Sigmoid colon (tissue), 7 donors: ENCODE measurements at regions of chr7 and their contacts with region 1.

Region 1: GRCh38 chr7:55365675-55366460 is 731 bp downstream of the LANCL2 start:
- DNase-seq: peak; percentile 97
- H3K4me3 ChIP-seq: peak overlapping the region; percentile 62 to 94 (median 74)
- H3K27ac ChIP-seq: peak overlapping the region; percentile 93 to 99 (median 96)
- H3K4me1 ChIP-seq: peaks cover 0 to 22% (median 18%) of the 10 kb centered on the region in 4 donors
- H3K27me3 ChIP-seq: no peaks in the 10 kb centered on the region
- CTCF ChIP-seq: peak in 3 of 4 experiments; percentile 20 to 41 (median 21)
- EP300 ChIP-seq: peak in 2 of 4 donors; percentile 9 to 15
- POLR2A ChIP-seq: peak; percentile 8 to 50

Region 2: DNA sequence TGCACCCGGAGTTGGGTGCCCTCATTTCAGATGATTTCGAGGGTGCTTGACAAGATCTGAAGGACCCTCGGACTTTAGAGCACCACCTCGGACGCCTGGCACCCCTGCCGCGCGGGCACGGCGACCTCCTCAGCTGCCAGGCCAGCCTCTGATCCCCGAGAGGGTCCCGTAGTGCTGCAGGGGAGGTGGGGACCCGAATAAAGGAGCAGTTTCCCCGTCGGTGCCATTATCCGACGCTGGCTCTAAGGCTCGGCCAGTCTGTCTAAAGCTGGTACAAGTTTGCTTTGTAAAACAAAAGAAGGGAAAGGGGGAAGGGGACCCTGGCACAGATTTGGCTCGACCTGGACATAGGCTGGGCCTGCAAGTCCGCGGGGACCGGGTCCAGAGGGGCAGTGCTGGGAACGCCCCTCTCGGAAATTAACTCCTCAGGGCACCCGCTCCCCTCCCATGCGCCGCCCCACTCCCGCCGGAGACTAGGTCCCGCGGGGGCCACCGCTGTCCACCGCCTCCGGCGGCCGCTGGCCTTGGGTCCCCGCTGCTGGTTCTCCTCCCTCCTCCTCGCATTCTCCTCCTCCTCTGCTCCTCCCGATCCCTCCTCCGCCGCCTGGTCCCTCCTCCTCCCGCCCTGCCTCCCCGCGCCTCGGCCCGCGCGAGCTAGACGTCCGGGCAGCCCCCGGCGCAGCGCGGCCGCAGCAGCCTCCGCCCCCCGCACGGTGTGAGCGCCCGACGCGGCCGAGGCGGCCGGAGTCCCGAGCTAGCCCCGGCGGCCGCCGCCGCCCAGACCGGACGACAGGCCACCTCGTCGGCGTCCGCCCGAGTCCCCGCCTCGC is 347.3 kb before region 1 on chr7 and contains the start of gene EGFR:
- intact Hi-C with region 1: loop called (anchors 5 kb)
- DNase-seq: peak; percentile 94
- H3K4me3 ChIP-seq: peak within 1 kb of the TSS; percentile 80 to 89 (median 82)
- H3K27ac ChIP-seq: peak within 1 kb of the TSS; percentile 93 to 97 (median 94)
- H3K4me1 ChIP-seq: peaks cover 0 to 28% (median 26%) of the 10 kb centered on the region in 4 donors
- H3K27me3 ChIP-seq: no peaks in the 10 kb centered on the region
- CTCF ChIP-seq: no peak
- EP300 ChIP-seq: no peak
- POLR2A ChIP-seq: peak in 1 of 2 donors; percentile 40
- total RNA-seq, gene EGFR: 35.6 to 61.5 (median 40.8) TPM

Region 3: DNA sequence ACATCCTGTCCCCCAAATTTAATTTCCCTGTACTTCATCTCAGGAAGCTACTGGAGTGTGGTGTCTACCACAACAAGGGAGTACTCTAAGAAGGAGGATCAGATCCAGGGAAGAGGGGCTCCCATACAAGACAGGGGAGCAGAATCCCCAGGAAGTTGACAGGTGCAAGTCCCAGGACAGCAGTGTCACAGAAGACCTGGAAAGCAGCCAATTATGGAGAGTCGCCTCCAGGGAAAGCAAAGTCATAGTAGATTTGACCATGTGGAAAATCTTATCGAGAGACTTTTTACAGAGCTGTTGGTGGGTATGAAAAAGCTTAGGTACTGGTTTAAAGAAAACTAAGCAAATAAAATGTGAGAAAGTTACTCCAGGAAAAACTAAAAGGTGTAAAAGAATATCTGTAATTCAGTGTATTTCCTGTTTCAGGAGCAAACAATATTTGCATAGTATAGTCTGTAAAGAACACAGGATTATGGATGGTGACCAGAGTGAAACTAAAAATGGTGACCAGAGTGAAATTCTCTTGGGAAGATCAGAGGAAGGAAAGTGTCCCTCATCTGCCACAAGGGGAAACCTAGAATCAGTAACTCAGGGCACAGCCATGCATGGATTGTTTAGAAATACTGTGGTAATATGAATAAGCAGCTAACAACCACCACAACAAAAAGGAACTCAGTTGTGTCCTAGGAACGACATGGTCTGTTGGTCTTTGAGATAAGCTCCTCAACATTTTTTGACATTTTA is 43.8 kb after region 1 on chr7:
- intact Hi-C with region 1: loop called (anchors 5 kb)
- DNase-seq: no peak
- H3K4me3 ChIP-seq: no peak overlapping the region
- H3K27ac ChIP-seq: no peak overlapping the region
- H3K4me1 ChIP-seq: no peaks in the 10 kb centered on the region
- H3K27me3 ChIP-seq: no peaks in the 10 kb centered on the region
- CTCF ChIP-seq: no peak
- EP300 ChIP-seq: no peak
- POLR2A ChIP-seq: no peak

Region 4: GRCh38 chr7:55887821-55888247 is 522.0 kb after region 1 on chr7:
- intact Hi-C with region 1: loop called (anchors 5 kb)
- DNase-seq: no peak
- H3K4me3 ChIP-seq: peak overlapping the region; percentile 45 to 67 (median 50)
- H3K27ac ChIP-seq: peak overlapping the region; percentile 63 to 73 (median 70)
- H3K4me1 ChIP-seq: peaks cover 0 to 10% (median 0%) of the 10 kb centered on the region in 4 donors
- H3K27me3 ChIP-seq: no peaks in the 10 kb centered on the region
- CTCF ChIP-seq: no peak
- EP300 ChIP-seq: no peak
- POLR2A ChIP-seq: no peak